Endothelial cell of umbilical vein (primary cell): ENCODE measurements at regions of chr12 and their contacts with region 1.

Region 1: DNA sequence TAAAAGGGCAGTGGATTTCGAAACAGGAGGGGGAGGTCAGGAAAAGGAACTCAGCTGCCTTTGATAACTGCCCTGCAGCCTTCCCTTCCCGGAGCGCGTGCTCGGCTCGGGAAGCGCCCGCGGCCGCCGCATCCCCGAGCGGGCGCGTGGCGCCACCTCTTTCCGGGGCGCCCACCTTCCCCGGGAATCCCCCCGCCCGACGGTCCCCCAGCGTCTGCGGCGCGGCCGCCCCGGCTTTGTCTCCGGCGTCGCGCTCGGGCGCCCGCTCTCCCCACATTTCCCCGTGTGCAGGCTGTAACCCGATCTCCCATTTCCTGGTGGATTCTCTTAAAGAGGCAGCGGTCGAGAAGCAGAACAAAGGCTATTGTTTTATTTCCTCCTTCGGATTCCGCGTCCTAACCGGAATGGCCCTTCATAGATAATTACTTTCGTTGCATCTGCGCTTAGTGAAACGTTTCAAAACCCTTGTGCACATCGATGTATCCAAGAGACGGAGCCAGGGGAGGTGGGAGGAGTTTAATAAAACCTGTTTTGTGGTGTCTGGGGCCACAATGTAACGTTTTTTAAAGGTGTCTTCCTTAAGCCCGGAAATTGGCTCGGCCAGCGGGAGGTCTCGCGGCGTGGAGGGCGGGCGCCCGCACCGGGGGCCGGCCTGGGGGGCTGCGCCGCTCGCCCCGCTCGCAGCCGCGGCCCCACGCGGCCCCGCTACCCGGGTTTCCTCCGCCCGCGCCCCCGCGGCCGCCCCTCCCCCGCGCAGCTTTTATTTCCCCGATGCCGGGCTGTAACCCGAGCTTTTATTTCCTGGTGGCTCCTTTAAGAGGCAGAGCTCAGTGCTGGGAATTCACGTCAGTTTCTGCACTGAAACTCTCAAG is at the start of gene ETV6:
- DNase-seq: peak; percentile 89
- H3K4me3 ChIP-seq: peak within 1 kb of the TSS; percentile 91 to 100 (median 92)
- H3K27ac ChIP-seq: peak within 1 kb of the TSS; percentile 100
- H3K4me1 ChIP-seq: peaks cover 17% of the 10 kb centered on the region
- H3K27me3 ChIP-seq: no peaks in the 10 kb centered on the region
- CTCF ChIP-seq: no peak
- POLR2A ChIP-seq: peak; percentile 71
- total RNA-seq, gene ETV6: 56.1 and 57.1 TPM in 2 replicates

Region 2: DNA sequence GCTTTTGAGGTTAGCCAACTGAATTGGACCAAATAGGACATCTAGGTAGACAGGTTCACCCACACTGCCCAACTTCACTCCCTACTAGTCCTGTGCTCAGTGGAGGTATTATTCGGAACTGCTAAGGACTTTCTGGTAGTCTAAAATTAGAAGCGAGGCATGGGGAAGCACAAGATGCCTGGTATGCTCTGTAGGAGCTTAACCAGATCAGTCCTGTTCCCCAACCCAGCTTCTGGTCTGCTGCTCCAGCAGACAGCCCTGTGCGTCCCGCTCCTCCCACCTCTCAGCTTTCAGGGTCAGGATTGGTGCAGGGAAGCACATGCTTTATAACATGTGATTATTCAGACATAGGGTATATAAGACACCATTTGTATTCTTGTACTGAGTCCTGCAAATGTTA is 410.8 kb before region 1 on chr12:
- CTCF ChIA-PET with region 1: no interaction called
- POLR2A ChIA-PET with region 1: no interaction called
- dilution Hi-C with region 1: no loop called
- intact Hi-C with region 1: no loop called
- DNase-seq: no peak
- H3K4me3 ChIP-seq: no peak overlapping the region
- H3K27ac ChIP-seq: no peak overlapping the region
- H3K4me1 ChIP-seq: no peaks in the 10 kb centered on the region
- H3K27me3 ChIP-seq: no peaks in the 10 kb centered on the region
- CTCF ChIP-seq: no peak
- POLR2A ChIP-seq: no peak

Region 3: DNA sequence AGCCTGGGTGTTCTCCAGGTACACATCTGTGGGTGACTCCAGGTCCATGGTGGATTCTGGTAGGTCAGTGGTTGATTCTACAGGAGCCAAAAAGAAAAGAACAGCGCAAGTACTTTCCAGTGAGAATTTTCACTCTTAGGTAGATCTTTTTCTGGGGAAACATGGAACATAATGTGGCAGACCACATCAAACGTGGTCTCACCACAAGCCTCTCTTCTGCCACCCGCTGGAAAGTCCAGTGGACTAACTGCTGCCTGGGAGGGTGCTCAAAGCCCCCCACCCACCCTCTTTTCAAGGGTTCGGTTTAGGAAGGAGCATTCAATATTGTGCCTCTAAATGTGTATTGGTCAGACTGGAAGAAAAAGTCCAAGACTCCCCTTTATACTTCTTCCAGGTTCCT is 217.6 kb before region 1 on chr12:
- CTCF ChIA-PET with region 1: no interaction called
- POLR2A ChIA-PET with region 1: no interaction called
- dilution Hi-C with region 1: no loop called
- intact Hi-C with region 1: no loop called
- DNase-seq: no peak
- H3K4me3 ChIP-seq: no peak overlapping the region
- H3K27ac ChIP-seq: no peak overlapping the region
- H3K4me1 ChIP-seq: no peaks in the 10 kb centered on the region
- H3K27me3 ChIP-seq: peaks cover 0 to 19% of the 10 kb centered on the region in 2 experiments
- CTCF ChIP-seq: no peak
- POLR2A ChIP-seq: no peak

Region 4: GRCh38 chr12:11673666-11674461 is 24.8 kb after region 1 on chr12:
- CTCF ChIA-PET with region 1: no interaction called
- POLR2A ChIA-PET with region 1: no interaction called
- dilution Hi-C with region 1: no loop called
- intact Hi-C with region 1: loop called (anchors 1 kb)
- DNase-seq: peak; percentile 76
- H3K4me3 ChIP-seq: peak overlapping the region in 1 of 3 experiments; percentile 18
- H3K27ac ChIP-seq: peak overlapping the region; percentile 55
- H3K4me1 ChIP-seq: peaks cover 37% of the 10 kb centered on the region
- H3K27me3 ChIP-seq: no peaks in the 10 kb centered on the region
- CTCF ChIP-seq: no peak
- POLR2A ChIP-seq: no peak

Region 5: DNA sequence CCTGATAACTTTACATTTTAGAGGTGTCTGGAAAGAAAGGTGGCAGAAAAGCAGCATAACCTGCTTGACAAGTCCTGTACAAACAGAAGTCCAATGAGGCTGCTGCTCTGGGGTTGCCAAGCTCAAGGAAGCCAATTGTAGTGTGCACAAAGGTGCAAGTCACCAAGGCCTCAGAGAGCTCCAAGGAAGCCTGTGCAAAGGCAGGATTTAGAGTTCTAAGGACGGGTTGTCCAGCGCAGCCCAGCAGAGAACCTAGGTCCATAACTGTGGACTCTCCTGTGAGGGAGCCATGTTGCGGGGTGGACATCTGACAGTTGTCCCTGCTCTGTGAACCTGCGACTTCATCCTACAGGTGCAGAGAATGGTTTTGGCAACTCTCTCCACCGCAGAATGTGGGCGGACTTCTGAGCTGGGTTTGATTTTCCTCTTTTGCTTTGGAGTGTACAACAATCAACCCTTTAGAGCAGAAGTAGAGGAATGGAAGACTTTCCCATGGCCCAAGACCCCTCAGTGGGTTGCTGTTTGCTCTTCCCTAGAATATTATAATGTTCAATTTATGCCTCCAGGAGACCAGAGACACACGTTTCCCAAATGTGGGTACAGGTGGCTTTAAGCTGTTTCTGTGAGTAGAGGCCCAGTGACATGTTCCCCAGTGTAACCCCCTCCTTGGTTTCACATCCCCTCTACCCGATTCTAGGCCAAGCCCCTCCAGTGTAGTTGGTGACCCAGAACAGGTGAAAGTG is 81.4 kb after region 1 on chr12:
- CTCF ChIA-PET with region 1: interaction called, 4 read pairs
- POLR2A ChIA-PET with region 1: no interaction called
- dilution Hi-C with region 1: no loop called
- intact Hi-C with region 1: loop called (anchors 1 kb)
- DNase-seq: no peak
- H3K4me3 ChIP-seq: no peak overlapping the region
- H3K27ac ChIP-seq: peak overlapping the region; percentile 91
- H3K4me1 ChIP-seq: peaks cover 43% of the 10 kb centered on the region
- H3K27me3 ChIP-seq: no peaks in the 10 kb centered on the region
- CTCF ChIP-seq: no peak
- POLR2A ChIP-seq: no peak

Region 6: DNA sequence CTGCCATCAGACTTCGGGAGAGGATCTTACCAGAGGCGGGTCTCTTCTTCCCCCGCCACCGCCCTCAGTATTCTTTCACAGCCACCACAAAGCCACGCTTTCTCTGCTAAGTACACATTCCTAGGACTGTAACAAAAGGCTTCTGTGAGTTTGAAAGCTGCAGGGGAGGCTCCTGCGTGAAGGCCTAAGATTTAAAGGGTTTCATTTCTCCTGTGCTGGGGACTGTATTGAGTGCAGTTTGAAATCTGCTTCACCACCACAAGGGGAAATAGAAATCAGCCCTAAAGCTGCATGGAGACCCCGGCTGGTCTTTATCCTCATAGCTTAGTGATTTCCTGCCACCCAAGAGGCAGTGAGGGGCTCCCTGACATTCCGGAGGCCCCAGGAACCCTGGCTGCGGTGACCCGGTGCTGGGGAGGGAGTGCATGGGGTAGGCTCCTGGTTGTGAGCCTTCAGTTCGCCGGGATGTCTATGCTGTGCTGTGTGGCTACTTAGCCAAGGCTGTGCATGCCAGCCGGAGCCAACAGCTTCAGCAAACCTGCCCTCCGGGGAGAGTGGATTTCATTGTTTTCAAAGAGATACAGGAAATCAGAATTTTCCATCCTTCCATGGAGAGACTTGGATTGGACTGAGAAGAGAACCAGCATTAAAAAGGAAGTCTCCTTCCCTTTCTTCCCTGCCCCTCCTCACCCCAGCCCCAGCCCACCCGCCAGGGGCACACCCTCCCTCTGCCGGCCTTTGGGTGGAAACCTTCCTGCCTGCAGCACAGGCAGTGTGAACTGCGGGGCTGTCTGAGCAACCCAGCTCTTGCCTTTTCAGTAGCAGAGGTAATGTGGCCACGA is 163.7 kb after region 1 on chr12:
- CTCF ChIA-PET with region 1: interaction called, 4 read pairs
- POLR2A ChIA-PET with region 1: no interaction called
- dilution Hi-C with region 1: no loop called
- intact Hi-C with region 1: loop called (anchors 1 kb)
- DNase-seq: peak; percentile 59
- H3K4me3 ChIP-seq: peak overlapping the region in 1 of 3 experiments; percentile 29
- H3K27ac ChIP-seq: peak overlapping the region; percentile 77
- H3K4me1 ChIP-seq: peaks cover 35% of the 10 kb centered on the region
- H3K27me3 ChIP-seq: no peaks in the 10 kb centered on the region
- CTCF ChIP-seq: peak in 1 of 2 donors; percentile 40
- POLR2A ChIP-seq: peak; percentile 46

Region 7: GRCh38 chr12:11885261-11886038 is 236.4 kb after region 1 on chr12:
- CTCF ChIA-PET with region 1: no interaction called
- POLR2A ChIA-PET with region 1: interaction called, 4 read pairs
- dilution Hi-C with region 1: no loop called
- intact Hi-C with region 1: loop called (anchors 1 kb)
- DNase-seq: peak; percentile 95
- H3K4me3 ChIP-seq: peak overlapping the region in 1 of 3 experiments; percentile 9
- H3K27ac ChIP-seq: peak overlapping the region; percentile 92
- H3K4me1 ChIP-seq: peaks cover 49% of the 10 kb centered on the region
- H3K27me3 ChIP-seq: no peaks in the 10 kb centered on the region
- CTCF ChIP-seq: no peak
- POLR2A ChIP-seq: peak; percentile 51

Region 8: DNA sequence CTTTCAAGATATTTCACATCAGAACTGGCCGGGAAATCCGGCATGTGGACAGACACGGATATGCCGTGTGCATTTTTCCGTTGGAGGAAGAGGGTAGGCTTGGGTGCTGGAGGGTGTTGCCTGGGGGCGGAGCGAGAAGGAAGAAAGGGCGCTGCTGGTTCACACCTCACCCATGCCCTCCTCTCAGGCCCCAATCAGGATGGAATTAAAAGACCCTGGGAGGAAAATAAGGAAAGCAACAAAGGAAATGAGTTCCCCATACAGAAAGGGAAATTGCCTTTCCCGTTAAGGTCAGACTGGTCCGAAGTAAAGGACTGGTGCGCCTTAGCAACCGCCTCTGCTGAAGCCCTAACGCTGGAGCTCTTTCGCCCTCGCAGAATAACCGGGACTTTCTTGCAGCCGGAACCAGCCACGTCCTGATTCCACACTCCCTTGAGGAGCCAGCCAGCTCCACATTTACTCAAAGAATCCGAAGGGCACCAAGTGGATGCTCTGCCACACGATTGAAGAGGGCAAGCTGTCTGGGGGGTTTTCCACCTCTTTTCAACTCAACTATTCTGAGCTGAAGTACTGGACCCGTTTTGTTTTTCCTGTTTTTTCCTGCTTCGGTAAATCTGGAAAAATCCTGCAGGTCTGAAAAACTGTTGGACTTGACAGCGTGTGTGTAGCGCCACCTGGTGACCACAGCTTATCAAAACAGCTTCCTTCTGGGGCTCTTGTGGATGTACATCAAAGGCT is 384.0 kb after region 1 on chr12:
- CTCF ChIA-PET with region 1: interaction called, 23 read pairs
- POLR2A ChIA-PET with region 1: no interaction called
- dilution Hi-C with region 1: no loop called
- intact Hi-C with region 1: loop called (anchors 1 kb)
- DNase-seq: peak; percentile 91
- H3K4me3 ChIP-seq: peak overlapping the region; percentile 22 to 67 (median 49)
- H3K27ac ChIP-seq: peak overlapping the region; percentile 73
- H3K4me1 ChIP-seq: peaks cover 8% of the 10 kb centered on the region
- H3K27me3 ChIP-seq: peaks cover 0 to under 1% of the 10 kb centered on the region in 2 experiments
- CTCF ChIP-seq: peak; percentile 78 to 82
- POLR2A ChIP-seq: peak; percentile 52